Posterior cingulate gyrus (tissue), 11 donors: ENCODE measurements at regions of chr22 and their contacts with region 1.

Region 1: GRCh38 chr22:22959147-22959827 is 71.7 kb downstream of the IGLL5 start:
- DNase-seq: peak; percentile 64 to 97 (median 88)

Region 2: GRCh38 chr22:22487869-22488597 is 471.3 kb before region 1 on chr22:
- intact Hi-C with region 1: no loop called
- DNase-seq: no peak

Region 3: GRCh38 chr22:22512951-22513350 is 446.3 kb before region 1 on chr22:
- intact Hi-C with region 1: loop called (anchors 5 kb)
- DNase-seq: no peak

Region 4: DNA sequence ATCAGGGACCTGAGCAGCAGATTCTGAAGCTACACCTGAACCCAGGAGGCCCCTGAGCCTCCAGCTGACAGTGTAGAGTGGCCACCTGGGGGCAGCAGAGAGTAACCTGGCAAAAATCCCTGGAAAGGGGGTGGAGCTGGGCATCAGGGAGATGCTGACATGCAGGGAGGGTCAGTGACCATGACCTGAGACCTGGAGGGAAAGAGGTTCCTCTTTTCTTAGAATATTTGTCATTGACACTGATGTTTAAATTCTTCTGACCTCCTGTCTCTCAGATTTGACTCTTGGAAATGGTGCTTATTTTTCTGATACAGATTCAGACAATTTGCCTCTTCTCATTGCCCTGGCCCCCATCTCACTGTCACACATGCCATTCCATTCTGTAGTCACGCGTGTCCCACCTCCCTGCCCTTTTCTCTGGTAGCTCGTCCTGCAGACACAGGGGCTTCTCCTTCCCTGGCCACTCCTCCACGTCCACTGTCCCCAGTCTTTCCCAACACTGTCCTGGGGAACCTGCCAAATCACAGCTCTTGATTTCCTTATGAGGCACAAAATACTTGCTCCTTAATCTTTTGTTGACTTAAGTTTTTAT is 188.9 kb before region 1 on chr22:
- intact Hi-C with region 1: no loop called
- DNase-seq: peak in 4 of 10 donors; percentile 19 to 37 (median 26)

Region 5: GRCh38 chr22:22848364-22848866 is 110.9 kb before region 1 on chr22:
- intact Hi-C with region 1: loop called (anchors 1 kb)
- DNase-seq: peak in 7 of 10 donors; percentile 19 to 92 (median 57)

Region 6: GRCh38 chr22:22942511-22943329 is 16.6 kb before region 1 on chr22:
- intact Hi-C with region 1: no loop called
- DNase-seq: peak in 7 of 10 donors; percentile 38 to 90 (median 67)

Region 7: DNA sequence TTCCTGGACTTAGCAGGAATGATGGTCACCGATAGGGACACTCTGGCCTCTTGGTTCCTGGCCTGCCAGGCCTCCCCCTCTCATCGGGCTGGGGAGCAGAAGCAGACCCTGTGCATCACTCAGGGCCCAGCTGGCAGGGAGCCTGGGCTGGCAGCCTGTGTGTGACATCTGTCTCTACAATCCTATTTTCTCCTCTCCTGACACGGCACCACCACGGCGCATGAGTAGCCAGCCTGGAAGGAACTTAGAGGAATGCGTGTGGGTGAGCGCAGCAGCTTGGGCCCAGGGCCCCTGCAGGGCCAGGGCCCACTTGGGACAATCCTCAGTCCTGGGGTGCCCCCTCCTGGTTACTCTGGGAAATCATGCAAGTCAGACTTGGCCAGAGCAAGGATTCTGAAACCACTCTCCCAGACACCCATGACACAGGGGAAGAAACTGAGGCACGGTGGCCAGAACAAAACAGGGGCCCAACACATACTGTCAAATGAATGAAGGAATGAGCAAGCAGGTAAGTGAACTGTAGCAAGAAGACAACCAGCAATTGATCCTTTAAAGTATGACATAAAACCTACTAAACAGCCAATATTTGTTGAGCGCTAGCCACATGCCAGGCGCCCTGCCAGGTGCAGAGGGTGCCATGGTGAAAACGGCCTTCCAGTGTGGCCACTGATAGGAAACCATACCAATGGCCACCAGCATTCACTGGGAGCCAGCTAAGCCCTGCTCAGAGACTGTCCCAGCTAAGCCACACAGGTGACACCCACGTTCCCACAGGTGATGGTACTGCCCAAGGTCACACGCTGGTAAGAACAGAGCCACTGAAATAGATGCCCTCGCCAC is 169.2 kb after region 1 on chr22:
- intact Hi-C with region 1: loop called (anchors 1 kb)
- DNase-seq: peak; percentile 71 to 98 (median 90)

Region 8: DNA sequence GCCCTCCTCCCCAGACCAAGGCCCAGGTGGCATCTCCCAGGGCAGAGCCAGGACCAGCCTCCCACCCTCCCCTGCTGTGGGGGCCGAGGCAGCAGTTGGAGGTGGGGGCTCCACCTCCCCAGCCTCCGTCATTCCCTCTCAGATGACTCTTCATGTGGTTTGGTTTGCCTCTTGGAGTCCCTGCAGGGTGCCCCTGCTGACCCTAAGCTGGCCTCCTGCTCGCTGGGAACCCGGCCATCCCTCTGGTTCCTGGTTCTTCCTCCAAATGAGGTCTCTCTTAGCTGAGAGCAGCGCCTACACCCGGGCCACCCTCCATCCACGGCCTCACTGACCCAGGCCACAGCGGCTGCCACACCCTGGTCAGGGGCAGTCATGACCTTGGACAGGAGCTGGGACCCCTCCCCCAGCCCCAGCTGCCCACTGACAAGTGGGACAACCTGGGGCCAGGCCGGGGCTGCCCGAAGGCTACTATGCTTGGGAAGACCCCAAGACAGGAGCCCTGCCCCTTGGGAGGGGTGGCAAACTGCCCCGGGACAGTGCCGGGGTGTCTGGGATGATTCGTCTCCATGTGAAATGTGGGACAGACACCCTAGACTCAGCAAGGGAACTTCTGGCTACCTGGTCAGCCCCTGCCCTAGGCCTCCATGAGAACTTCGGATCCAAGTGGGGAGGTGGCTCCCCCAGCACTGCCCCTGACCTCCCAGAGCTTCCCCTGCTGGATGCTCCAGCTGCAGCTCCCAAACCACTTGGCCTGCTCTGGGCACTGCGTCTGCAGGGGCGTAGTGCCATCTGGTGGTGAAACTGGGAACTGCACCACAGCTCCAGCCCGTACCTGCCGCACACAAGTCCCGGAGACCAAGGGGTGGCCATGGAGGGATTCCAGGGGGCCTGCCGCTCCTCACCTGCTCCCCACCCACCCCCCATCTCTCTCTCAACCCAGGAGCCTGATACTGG is 426.3 kb after region 1 on chr22:
- intact Hi-C with region 1: loop called (anchors 2 kb)
- DNase-seq: peak; percentile 75 to 98 (median 91)